Heart right ventricle (tissue), 16 donors: ENCODE measurements at regions of chr1 and their contacts with region 1.

Region 1: GRCh38 chr1:46806271-46807020 is 7.6 kb downstream of the CYP4B1 start:
- DNase-seq: peak; percentile 53 to 69
- ATAC-seq: peak; percentile 85 to 93 (median 92)
- H3K4me3 ChIP-seq: peak overlapping the region in 5 of 10 donors; percentile 3 to 18 (median 10)
- H3K27ac ChIP-seq: peak overlapping the region; percentile 48 to 92 (median 81)
- H3K4me1 ChIP-seq: peaks cover 31 to 58% (median 43%) of the 10 kb centered on the region in 9 donors
- H3K27me3 ChIP-seq: peaks cover 0 to 3% (median 0%) of the 10 kb centered on the region in 7 donors
- CTCF ChIP-seq: no peak

Region 2: DNA sequence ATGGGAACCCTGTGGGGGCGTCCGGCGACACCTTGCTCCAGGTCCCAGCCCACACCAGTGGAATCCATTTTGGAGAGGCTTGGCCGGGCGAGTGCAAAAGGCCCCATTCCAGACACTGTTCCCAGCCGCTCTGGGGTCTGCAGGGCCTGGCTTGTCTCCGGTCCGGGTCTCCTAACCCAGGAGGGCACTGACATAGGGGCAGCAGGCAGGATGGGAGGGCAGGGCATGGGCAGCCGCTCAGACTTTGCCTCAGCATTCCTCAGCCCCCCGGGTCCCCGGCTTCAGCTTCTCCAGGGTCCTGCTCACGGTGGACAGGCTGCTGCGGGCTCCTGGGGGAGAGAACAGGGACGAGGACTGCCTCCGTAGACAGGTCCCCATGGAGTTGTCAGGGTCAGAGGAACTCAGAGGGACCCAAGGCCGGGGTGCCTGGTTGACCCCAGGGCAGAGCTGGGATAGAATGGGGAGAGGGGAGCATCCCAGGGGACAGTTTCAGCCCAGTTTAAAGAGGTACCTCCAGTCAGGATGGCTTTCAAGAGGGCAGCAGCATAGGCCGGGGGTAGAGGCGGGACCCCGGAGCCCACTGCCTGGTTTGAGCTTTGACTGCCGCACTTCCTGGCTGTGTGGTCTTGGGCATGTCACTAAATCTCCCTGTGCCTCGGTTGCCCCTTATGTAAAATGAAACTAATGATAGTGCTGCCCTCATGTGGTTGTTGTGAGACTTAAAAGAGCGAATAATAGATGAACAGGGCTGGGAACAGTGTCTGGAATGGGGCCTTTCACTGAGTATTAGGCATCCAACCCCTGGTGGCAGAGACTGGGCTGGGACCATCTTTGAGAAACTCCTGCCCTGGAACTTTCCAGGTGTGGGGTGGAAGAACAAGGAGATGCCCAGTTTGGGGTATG is 258.7 kb before region 1 on chr1:
- intact Hi-C with region 1: no loop called
- DNase-seq: no peak
- ATAC-seq: peak in 5 of 8 donors; percentile 16 to 45 (median 40)
- H3K4me3 ChIP-seq: no peak overlapping the region
- H3K27ac ChIP-seq: no peak overlapping the region
- H3K4me1 ChIP-seq: peaks cover 0 to 7% (median 5%) of the 10 kb centered on the region in 9 donors
- H3K27me3 ChIP-seq: peaks cover 6 to 84% (median 53%) of the 10 kb centered on the region in 7 donors
- CTCF ChIP-seq: peak in 7 of 9 donors; percentile 36 to 56 (median 48)

Region 3: GRCh38 chr1:46630719-46631118 is 175.7 kb before region 1 on chr1:
- intact Hi-C with region 1: no loop called
- DNase-seq: no peak
- ATAC-seq: no peak
- H3K4me3 ChIP-seq: no peak overlapping the region
- H3K27ac ChIP-seq: no peak overlapping the region
- H3K4me1 ChIP-seq: no peaks in the 10 kb centered on the region
- H3K27me3 ChIP-seq: no peaks in the 10 kb centered on the region
- CTCF ChIP-seq: peak in 1 of 9 donors; percentile 7

Region 4: GRCh38 chr1:46772571-46772970 is 33.9 kb before region 1 on chr1:
- intact Hi-C with region 1: loop called in 1 of 10 experiments (anchors 2 kb)
- DNase-seq: no peak
- ATAC-seq: peak in 5 of 8 donors; percentile 50 to 85 (median 71)
- H3K4me3 ChIP-seq: no peak overlapping the region
- H3K27ac ChIP-seq: peak overlapping the region in 1 of 10 donors; percentile 35
- H3K4me1 ChIP-seq: no peaks in the 10 kb centered on the region
- H3K27me3 ChIP-seq: no peaks in the 10 kb centered on the region
- CTCF ChIP-seq: no peak

Region 5: DNA sequence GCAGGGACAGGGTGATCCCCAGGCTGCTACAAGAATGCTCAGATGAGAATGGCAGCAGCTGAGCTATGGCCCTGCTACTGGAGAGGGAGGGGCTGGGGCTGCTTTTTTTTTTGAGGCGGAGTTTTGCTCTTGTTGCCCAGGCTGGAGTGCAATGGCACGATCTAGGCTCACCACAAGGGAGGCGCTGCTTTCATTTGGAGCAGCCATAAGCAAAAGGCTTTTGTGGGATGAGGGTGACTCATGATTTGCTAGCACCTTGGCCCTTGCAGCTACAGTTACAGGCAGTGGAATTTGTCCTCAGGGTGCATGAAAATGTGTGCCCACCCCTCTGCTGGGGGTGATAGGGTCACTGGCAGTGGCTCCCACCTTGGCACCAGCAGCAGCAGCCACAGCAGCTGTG is 298.4 kb after region 1 on chr1:
- intact Hi-C with region 1: no loop called
- DNase-seq: no peak
- ATAC-seq: no peak
- H3K4me3 ChIP-seq: no peak overlapping the region
- H3K27ac ChIP-seq: no peak overlapping the region
- H3K4me1 ChIP-seq: no peaks in the 10 kb centered on the region
- H3K27me3 ChIP-seq: no peaks in the 10 kb centered on the region
- CTCF ChIP-seq: no peak